HepG2 (cell line): ENCODE measurements at regions of chr15 and their contacts with region 1.

Region 1: DNA sequence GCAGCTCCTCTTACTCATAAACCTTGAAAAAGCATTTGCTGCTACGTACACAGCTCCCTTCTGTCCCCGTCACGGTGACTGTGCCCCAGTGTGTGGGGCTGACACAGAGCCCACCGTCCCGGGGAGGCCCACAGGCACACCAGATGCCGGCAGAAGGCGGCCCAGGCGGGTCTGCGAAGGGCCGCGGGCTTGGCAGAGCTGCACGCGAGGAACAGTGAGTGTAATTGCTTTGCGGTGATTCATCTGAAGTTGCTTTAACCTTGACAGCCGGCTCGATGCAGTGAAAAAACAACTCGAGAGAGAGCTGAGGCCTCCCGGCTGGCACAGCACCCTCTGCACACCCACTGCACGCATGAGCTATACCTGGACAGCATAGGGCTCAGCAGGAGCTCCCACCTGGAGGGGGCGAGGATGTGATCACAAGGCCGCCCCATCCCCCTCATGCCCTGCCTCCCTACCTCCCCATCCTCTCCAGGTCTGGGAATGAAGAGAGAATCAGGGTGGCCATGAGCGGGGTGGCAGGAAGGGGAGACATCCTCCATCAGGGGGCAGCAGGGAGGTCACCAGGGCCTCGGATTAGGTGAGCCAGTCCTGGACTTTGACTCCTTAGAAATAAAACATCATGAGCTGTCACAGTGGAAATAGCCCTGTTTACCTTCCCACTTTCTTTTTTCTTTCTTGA is 172.7 kb downstream of the MEGF11 start:
- DNase-seq: peak; percentile 72
- ATAC-seq: peak; percentile 91
- H3K4me3 ChIP-seq: no peak overlapping the region; a peak in 1 of 6 replicates
- H3K27ac ChIP-seq: no peak overlapping the region
- H3K4me1 ChIP-seq: peaks cover 14% of the 10 kb centered on the region
- H3K27me3 ChIP-seq: peaks cover 0 to 24% of the 10 kb centered on the region in 2 experiments; a peak in 4 of 5 replicates
- CTCF ChIP-seq: peak; percentile 69
- EP300 ChIP-seq: no peak
- POLR2A ChIP-seq: no peak
- RAD21 ChIP-seq: peak; percentile 55

Region 2: DNA sequence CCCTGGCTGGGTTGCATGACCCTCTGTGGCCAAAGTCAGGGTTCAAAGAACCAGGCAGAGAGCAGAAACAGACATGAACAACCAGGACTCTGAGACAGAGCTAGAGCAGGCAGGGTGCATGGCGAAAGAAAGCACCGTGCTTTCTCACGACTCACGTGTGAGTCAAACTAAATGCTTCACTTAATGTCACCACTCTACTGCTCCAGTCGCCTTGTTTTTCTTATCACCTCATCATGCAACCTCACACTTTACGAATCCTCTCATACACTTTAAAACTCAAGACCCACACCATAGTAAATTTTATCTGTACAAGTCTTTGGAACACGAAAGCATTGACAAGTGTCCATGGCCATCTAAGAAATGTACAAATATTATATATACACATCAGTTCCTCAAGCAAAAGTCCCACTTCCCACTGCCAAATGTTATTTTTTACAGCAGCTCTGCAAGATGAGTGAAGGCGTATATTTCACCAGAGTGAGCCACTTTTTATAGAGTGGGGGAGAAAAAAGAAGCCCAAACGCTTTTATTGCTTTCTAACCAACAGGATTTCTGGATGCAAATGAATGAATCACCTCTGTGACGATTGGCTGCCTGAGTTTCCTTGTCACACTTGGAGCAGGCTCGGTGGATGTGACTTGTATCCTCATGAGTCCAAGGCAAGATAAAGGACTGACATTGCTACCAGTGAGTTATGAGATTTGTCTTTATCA is 188.6 kb after region 1 on chr15:
- CTCF ChIA-PET with region 1: no interaction called
- POLR2A ChIA-PET with region 1: no interaction called
- in situ Hi-C with region 1: no loop called
- intact Hi-C with region 1: loop called (anchors 5 kb)
- DNase-seq: no peak
- ATAC-seq: no peak
- H3K4me3 ChIP-seq: no peak overlapping the region
- H3K27ac ChIP-seq: no peak overlapping the region
- H3K4me1 ChIP-seq: no peaks in the 10 kb centered on the region
- H3K27me3 ChIP-seq: peaks cover 2 to 12% of the 10 kb centered on the region in 2 experiments; a peak in 2 of 5 replicates
- CTCF ChIP-seq: no peak
- EP300 ChIP-seq: no peak
- POLR2A ChIP-seq: no peak
- RAD21 ChIP-seq: no peak